HEK293 (cell line): ENCODE measurements at regions of chr15 and their contacts with region 1.

Region 1: DNA sequence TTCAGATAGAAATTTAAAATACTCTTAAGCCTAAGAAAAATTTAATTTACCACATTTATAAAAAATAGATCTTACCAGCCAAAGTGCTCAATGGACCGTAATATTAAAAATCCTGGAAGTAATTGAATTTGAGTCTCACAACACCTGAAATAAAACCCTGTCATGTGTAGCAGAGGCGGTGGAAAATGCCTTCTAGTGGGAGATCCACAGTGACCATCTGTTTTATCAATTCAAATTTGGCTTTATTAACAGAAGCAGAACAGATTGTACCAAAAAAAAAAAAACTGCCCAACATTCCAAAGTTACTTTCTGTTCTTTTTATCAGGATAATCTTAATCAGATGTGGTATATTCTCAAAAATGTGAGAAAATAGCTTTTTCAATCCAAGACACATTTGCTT is 71.7 kb downstream of the DMXL2 start:
- H3K4me3 ChIP-seq: no peak overlapping the region
- H3K27ac ChIP-seq: no peak overlapping the region
- H3K4me1 ChIP-seq: no peaks in the 10 kb centered on the region
- CTCF ChIP-seq: no peak

Region 2: DNA sequence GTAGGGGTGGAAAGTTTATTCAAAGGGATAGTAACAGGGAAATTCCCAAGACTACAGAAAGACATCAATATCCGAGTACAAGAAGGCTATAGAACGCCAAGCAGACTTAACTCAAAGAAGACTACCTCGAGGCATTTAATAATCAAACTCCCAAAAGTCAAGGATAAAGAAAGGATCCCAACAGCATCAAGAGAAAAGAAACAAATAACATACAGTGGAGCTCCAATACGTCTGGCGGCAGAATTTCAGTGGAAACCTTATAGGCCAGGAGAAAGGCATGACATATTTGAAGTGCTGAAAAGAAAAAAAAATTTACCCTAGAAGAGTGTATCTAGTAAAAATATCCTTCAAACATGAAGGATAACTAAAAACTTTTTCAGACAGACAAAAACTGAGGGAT is 23.9 kb before region 1 on chr15:
- CTCF ChIA-PET with region 1: no interaction called
- POLR2A ChIA-PET with region 1: no interaction called
- H3K4me3 ChIP-seq: no peak overlapping the region
- H3K27ac ChIP-seq: no peak overlapping the region
- H3K4me1 ChIP-seq: no peaks in the 10 kb centered on the region
- CTCF ChIP-seq: no peak

Region 3: DNA sequence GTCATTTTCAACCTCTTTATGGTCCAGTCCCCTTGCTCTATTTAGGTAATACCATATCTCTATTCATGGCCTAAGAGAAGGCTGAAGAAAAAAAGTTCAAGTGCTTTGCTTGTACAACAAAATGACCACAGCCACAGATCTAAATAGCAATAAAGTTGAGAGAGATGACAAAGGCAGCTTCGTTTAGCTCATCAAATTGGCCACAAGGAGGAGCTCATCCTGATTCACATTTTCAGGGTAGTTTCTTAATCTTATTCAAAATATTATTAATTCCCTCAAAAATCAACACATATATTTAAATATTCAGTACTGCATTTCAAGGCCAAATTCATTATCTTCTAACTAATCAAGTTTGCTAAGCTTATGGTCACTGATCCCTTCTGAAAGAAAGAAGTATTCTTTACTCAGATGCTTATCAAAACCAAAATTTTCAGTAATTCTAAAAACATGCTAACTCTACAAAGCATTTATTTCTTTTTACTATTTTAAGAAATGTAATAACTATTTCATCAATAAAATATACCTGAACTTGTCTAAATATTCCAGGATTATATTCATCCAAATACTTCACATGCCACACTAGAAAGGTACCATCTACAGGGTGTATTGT is 13.8 kb before region 1 on chr15:
- CTCF ChIA-PET with region 1: interaction called, 16 read pairs
- POLR2A ChIA-PET with region 1: no interaction called
- H3K4me3 ChIP-seq: no peak overlapping the region
- H3K27ac ChIP-seq: no peak overlapping the region
- H3K4me1 ChIP-seq: no peaks in the 10 kb centered on the region
- CTCF ChIP-seq: no peak